MCF 10A (cell line): ENCODE measurements at regions of chr21 and their contacts with region 1.

Region 1: GRCh38 chr21:26715878-26716506 is 129.2 kb downstream of the ADAMTS1 start:
- DNase-seq: peak; percentile 69
- H3K4me3 Mint-ChIP-seq: no peak overlapping the region
- H3K27ac Mint-ChIP-seq: no peak overlapping the region
- H3K4me1 Mint-ChIP-seq: no peaks in the 10 kb centered on the region
- H3K27me3 Mint-ChIP-seq: no peaks in the 10 kb centered on the region
- CTCF ChIP-seq: peak; percentile 70

Region 2: GRCh38 chr21:25790122-25790877 is 925.7 kb before region 1 on chr21:
- CTCF ChIA-PET with region 1: interaction called, 6 read pairs
- POLR2A ChIA-PET with region 1: no interaction called
- intact Hi-C with region 1: loop called (anchors 5 kb)
- DNase-seq: peak; percentile 49
- H3K4me3 Mint-ChIP-seq: peak overlapping the region; percentile 64
- H3K27ac Mint-ChIP-seq: no peak overlapping the region
- H3K4me1 Mint-ChIP-seq: peaks cover 6% of the 10 kb centered on the region
- H3K27me3 Mint-ChIP-seq: peaks cover 24% of the 10 kb centered on the region
- CTCF ChIP-seq: peak; percentile 44

Region 3: DNA sequence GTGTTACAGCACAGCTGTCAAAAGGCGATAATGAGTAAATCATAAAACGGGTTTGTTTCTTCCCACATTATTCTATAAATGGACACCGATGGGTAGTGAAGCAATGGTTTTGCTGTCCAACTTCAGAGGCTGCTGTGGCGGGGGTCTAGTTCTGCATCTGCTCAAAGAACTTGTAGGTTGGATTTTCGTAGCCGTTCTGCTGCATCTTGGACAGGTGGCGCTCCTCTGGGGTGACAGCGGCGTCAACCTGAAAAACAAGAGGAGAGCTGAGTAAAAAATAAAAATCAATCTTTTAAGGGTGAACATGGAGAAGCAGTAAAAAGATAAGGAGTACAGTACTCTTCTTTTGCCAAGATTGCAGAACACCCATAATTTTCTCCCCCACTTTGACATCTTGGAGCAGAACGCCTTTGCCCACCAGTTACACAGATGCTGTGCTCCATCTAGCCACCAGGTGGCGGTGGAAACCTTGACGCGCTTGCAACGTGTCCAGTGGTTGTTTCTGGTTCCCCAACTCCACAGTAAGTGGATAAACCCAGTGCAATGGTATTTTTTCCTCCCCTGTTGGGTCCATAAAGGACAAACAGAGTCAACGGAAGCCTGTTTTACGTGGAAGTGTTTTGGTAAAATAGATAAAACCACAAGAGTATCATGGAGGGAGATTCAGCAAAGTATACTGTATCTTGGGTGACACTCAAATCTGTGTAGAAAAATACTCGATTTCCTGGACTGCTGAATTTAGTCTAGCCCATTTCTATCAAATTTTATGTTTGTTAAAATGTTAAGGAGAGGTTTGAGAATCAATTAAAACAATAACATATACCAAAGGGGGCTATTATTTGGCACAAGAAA is 834.2 kb before region 1 on chr21:
- CTCF ChIA-PET with region 1: interaction called, 22 read pairs
- POLR2A ChIA-PET with region 1: interaction called, 3 read pairs
- intact Hi-C with region 1: loop called (anchors 1 kb)
- DNase-seq: peak; percentile 67
- H3K4me3 Mint-ChIP-seq: no peak overlapping the region
- H3K27ac Mint-ChIP-seq: no peak overlapping the region
- H3K4me1 Mint-ChIP-seq: no peaks in the 10 kb centered on the region
- H3K27me3 Mint-ChIP-seq: no peaks in the 10 kb centered on the region
- CTCF ChIP-seq: peak; percentile 88

Region 4: GRCh38 chr21:25895565-25896205 is 820.3 kb before region 1 on chr21:
- CTCF ChIA-PET with region 1: interaction called, 5 read pairs
- POLR2A ChIA-PET with region 1: no interaction called
- intact Hi-C with region 1: loop called (anchors 5 kb)
- DNase-seq: peak; percentile 55
- H3K4me3 Mint-ChIP-seq: no peak overlapping the region
- H3K27ac Mint-ChIP-seq: no peak overlapping the region
- H3K4me1 Mint-ChIP-seq: peaks cover 9% of the 10 kb centered on the region
- H3K27me3 Mint-ChIP-seq: no peaks in the 10 kb centered on the region
- CTCF ChIP-seq: peak; percentile 50

Region 5: GRCh38 chr21:26177746-26178426 is 538.1 kb before region 1 on chr21:
- CTCF ChIA-PET with region 1: interaction called, 5 read pairs
- POLR2A ChIA-PET with region 1: no interaction called
- intact Hi-C with region 1: loop called (anchors 2 kb)
- DNase-seq: no peak
- H3K4me3 Mint-ChIP-seq: no peak overlapping the region
- H3K27ac Mint-ChIP-seq: no peak overlapping the region
- H3K4me1 Mint-ChIP-seq: peaks cover 5% of the 10 kb centered on the region
- H3K27me3 Mint-ChIP-seq: no peaks in the 10 kb centered on the region
- CTCF ChIP-seq: no peak

Region 6: DNA sequence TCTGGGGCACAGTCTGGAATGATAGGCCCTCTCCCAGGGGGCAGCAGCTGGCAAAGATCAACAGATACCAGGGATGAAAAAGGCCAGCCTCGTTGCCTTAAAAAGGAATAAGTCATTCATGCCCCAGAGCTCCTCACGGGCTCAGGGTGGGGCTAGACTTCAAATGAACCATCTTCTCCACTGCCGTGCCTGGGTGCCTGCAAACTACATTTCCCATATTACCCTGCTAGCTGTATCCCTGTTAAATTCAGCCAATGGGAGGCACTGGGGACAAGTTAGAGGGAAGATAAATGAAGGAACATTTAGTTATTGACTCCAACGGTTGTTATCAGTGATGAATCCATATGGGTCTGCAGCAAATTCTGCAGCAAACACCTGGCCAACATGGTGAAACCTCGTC is 41.7 kb before region 1 on chr21:
- CTCF ChIA-PET with region 1: no interaction called
- POLR2A ChIA-PET with region 1: no interaction called
- intact Hi-C with region 1: no loop called
- DNase-seq: no peak
- H3K4me3 Mint-ChIP-seq: no peak overlapping the region
- H3K27ac Mint-ChIP-seq: no peak overlapping the region
- H3K4me1 Mint-ChIP-seq: no peaks in the 10 kb centered on the region
- H3K27me3 Mint-ChIP-seq: no peaks in the 10 kb centered on the region
- CTCF ChIP-seq: no peak

Region 7: GRCh38 chr21:26732432-26733221 is 16.6 kb after region 1 on chr21:
- CTCF ChIA-PET with region 1: interaction called, 13 read pairs
- POLR2A ChIA-PET with region 1: interaction called, 3 read pairs
- intact Hi-C with region 1: no loop called
- DNase-seq: peak; percentile 51
- H3K4me3 Mint-ChIP-seq: no peak overlapping the region
- H3K27ac Mint-ChIP-seq: no peak overlapping the region
- H3K4me1 Mint-ChIP-seq: no peaks in the 10 kb centered on the region
- H3K27me3 Mint-ChIP-seq: no peaks in the 10 kb centered on the region
- CTCF ChIP-seq: peak; percentile 42